ENCODE measurements at regions of chr3 and their contacts with region 1.

Region 1: DNA sequence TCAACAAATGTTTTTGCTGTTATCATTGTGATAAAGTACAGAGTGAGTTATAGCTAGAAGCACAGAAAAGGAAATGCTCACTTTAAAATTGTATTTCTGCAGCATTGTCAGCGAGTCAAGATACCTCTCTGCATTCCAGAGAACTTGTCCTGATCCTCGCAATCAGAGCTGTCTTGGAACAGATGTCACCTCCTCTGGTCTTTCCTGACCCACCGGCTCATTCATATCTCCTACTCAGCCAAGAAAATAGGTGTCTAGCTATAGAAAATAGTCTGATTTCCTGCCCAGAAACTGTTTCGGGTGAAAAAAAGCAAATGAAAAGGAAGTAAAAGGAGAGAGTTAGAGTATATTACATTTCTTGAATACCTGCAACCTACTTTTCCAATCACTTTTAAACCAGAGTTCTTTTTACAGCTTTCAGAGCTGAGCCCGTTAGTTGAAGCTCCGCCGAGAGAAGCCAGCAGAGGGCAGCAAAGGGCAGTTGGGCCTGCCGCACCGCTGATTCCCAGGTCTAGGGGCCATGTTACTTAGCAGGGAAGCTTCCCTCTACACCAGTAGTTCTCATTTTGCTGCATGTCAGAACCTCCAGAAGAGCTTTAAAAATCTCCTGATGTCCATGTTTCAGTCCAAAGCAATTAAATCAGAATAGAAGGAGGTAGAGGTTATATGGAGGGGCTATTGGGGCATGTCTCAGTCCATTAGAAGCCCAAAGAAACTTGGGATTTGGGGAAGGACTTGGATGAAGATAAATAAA is 185.7 kb upstream of the THRB start:
- DNase-seq: peak; percentile 77

Region 2: GRCh38 chr3:23999012-23999641 is 681.3 kb before region 1 on chr3:
- intact Hi-C with region 1: loop called (anchors 2 kb)
- DNase-seq: no peak

Region 3: GRCh38 chr3:24704496-24704895 is 24.1 kb after region 1 on chr3:
- intact Hi-C with region 1: no loop called
- DNase-seq: no peak